Esophagus muscularis mucosa (tissue), 4 donors: ENCODE measurements at regions of chr18 and their contacts with region 1.

Region 1: GRCh38 chr18:27349284-27349882 is 164.3 kb upstream of the CHST9 start:
- DNase-seq: no peak
- H3K4me3 ChIP-seq: no peak overlapping the region
- H3K27ac ChIP-seq: no peak overlapping the region
- H3K4me1 ChIP-seq: no peaks in the 10 kb centered on the region
- H3K27me3 ChIP-seq: no peaks in the 10 kb centered on the region
- CTCF ChIP-seq: no peak
- EP300 ChIP-seq: no peak
- POLR2A ChIP-seq: no peak

Region 2: DNA sequence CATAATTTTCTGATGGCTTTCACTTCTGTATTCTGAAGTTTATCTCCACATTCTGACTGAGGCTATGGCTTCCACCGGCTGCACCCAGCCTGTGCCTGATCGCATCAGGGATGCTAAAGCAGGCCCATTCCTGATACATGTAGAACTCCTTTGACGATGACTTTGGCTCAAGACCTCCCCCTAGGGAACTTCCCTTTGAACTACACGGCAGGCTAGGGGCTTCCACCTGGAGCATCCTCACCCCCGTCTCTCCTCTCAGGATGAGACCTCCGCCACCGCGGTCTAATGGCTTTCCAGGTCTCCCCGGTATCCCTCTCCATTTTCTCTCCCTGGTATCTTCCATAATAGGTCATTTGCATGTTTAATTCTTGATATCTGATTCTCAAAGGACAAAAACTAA is 50.6 kb after region 1 on chr18:
- intact Hi-C with region 1: loop called (anchors 5 kb)
- DNase-seq: no peak
- H3K4me3 ChIP-seq: no peak overlapping the region
- H3K27ac ChIP-seq: no peak overlapping the region
- H3K4me1 ChIP-seq: no peaks in the 10 kb centered on the region
- H3K27me3 ChIP-seq: no peaks in the 10 kb centered on the region
- CTCF ChIP-seq: no peak
- EP300 ChIP-seq: no peak
- POLR2A ChIP-seq: no peak